Heart left ventricle (tissue), 16 donors: ENCODE measurements at regions of chr11 and their contacts with region 1.

Region 1: DNA sequence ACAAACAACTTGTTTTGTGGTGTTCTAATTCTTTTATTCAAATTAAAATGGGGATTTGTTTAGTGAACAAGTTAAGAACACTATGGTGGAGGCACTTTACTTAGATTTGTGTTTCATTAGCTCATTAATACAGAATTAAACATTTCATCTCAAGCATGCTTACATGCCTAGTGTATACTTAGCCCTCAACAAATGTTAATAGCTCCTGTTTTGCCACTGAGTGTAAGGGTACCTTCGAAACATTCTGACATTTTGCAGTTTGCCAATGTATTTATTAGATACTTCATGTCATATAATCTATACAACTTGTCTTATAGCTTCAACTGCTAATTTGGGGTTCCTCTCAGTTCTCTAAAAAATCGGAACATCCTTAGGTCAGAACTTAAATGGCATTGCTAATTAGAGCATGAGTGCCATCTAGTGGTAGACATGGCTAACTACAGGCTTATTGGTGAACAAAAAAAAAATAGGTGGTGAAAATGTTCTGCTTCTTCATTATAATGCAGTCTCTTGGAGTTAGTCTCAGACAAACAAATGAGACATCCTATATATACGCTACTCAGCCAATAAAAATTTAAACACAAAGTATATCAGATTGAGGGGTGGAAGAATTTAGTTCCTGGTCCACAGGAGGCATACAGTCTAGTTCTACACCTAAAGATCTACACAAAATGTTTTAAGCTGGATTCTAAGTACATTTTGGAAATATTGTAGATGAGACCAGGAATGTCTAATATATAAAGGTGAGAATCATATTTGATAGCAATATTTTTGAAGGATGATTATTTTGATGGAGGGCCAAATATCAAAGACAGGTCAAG is 4.9 kb upstream of the CNTN5 start:
- DNase-seq: no peak
- ATAC-seq: peak in 1 of 4 donors; percentile 43
- H3K4me3 ChIP-seq: no peak overlapping the region
- H3K27ac ChIP-seq: no peak overlapping the region
- H3K4me1 ChIP-seq: peaks cover 0 to 7% (median 0%) of the 10 kb centered on the region in 12 donors
- H3K27me3 ChIP-seq: peaks cover 0 to 22% (median 0%) of the 10 kb centered on the region in 9 donors
- CTCF ChIP-seq: peak; percentile 78 to 93 (median 89)
- POLR2A ChIP-seq: no peak

Region 2: DNA sequence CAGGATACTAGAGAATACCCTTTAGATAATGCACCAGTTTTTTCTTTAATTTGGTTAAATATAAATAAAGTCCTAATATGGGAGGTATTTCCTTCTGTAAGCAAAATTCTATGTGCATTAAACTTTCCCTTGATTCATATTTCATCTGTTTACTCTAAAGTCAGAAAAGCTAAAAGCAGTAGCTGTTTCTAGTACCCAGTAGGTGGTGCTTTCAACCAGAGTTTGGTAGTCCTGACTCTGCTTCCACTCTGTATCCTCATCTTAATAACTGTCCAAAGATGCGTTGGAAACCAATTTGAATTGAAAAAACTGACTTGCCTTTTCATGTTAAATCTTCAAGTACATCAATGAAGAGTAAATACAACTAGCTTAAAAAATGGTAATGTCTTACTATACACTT is 1560.9 kb before region 1 on chr11:
- intact Hi-C with region 1: loop called in 3 of 10 experiments (anchors 5 to 10 kb)
- DNase-seq: no peak
- ATAC-seq: no peak
- H3K4me3 ChIP-seq: no peak overlapping the region
- H3K27ac ChIP-seq: no peak overlapping the region
- H3K4me1 ChIP-seq: no peaks in the 10 kb centered on the region
- H3K27me3 ChIP-seq: no peaks in the 10 kb centered on the region
- CTCF ChIP-seq: peak in 8 of 12 donors; percentile 20 to 56 (median 44)
- POLR2A ChIP-seq: no peak

Region 3: GRCh38 chr11:99066618-99067317 is 50.9 kb after region 1 on chr11:
- intact Hi-C with region 1: no loop called
- DNase-seq: no peak
- ATAC-seq: no peak
- H3K4me3 ChIP-seq: no peak overlapping the region
- H3K27ac ChIP-seq: no peak overlapping the region
- H3K4me1 ChIP-seq: no peaks in the 10 kb centered on the region
- H3K27me3 ChIP-seq: no peaks in the 10 kb centered on the region
- CTCF ChIP-seq: no peak
- POLR2A ChIP-seq: no peak

Region 4: GRCh38 chr11:99192716-99193115 is 176.9 kb after region 1 on chr11:
- intact Hi-C with region 1: no loop called
- DNase-seq: no peak
- ATAC-seq: no peak
- H3K4me3 ChIP-seq: no peak overlapping the region
- H3K27ac ChIP-seq: no peak overlapping the region
- H3K4me1 ChIP-seq: no peaks in the 10 kb centered on the region
- H3K27me3 ChIP-seq: no peaks in the 10 kb centered on the region
- CTCF ChIP-seq: no peak
- POLR2A ChIP-seq: no peak

Region 5: DNA sequence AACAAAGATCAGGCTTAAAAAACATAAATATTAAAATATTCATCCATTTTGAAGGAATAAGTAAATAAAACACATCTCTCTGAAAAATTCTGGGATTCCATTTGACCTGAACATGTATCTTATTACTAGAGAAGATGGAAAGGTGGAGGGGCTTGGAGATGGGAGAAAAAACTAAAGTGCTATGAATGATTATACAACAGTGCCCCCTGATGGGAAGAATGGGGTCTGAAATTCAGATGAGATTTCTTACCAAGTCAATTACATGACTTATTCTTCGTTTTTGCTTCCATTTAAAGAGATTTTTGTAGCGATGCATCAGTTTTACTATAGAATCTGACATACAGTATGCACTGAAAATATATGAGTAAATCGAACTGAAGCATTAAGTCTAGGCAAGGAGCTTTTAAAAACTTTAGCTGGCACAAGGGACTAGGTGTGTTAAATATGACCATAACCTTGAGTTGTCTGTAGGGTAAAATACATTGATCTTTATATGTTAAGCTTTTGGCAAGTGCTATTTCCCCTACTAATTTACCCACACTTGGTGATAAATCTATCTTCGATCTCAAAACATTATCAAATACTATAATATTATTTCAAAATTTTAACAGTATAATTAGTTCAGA is 723.7 kb after region 1 on chr11:
- intact Hi-C with region 1: loop called in 1 of 10 experiments (anchors 5 kb)
- DNase-seq: no peak
- ATAC-seq: no peak
- H3K4me3 ChIP-seq: no peak overlapping the region
- H3K27ac ChIP-seq: no peak overlapping the region
- H3K4me1 ChIP-seq: peaks cover 0 to 2% (median 0%) of the 10 kb centered on the region in 12 donors
- H3K27me3 ChIP-seq: no peaks in the 10 kb centered on the region
- CTCF ChIP-seq: peak in 11 of 12 donors; percentile 20 to 64 (median 51)
- POLR2A ChIP-seq: no peak